Activated CD4-positive, alpha-beta memory T cell treated with anti-CD3 and anti-CD28 coated beads for 36 hours (primary cell): ENCODE measurements at regions of chr15 and their contacts with region 1.

Region 1: DNA sequence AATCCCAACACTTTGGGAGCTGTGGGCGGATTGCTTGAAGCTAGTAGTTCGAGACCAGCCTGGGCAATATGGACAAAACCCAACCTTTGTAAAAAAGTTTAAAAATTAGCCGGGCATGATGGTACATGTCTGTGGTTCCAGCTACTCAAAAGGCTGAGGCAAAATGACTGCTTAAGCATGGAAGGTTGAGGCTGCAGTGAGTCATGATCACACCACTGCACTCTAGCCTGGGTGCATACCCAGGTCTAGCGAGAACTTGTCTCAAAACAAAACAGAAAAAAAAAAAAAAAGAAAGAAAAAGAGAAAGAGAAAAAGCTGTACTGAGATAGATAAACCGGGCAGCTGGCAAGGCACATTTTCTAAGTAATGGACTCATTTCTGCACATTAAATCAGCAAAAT is 10.6 kb downstream of the ARPP19 start:
- DNase-seq: peak; percentile 84
- H3K4me3 Mint-ChIP-seq: peak overlapping the region; percentile 37
- H3K27ac Mint-ChIP-seq: peak overlapping the region; percentile 97
- H3K4me1 Mint-ChIP-seq: peaks cover 72% of the 10 kb centered on the region
- H3K27me3 Mint-ChIP-seq: no peaks in the 10 kb centered on the region

Region 2: DNA sequence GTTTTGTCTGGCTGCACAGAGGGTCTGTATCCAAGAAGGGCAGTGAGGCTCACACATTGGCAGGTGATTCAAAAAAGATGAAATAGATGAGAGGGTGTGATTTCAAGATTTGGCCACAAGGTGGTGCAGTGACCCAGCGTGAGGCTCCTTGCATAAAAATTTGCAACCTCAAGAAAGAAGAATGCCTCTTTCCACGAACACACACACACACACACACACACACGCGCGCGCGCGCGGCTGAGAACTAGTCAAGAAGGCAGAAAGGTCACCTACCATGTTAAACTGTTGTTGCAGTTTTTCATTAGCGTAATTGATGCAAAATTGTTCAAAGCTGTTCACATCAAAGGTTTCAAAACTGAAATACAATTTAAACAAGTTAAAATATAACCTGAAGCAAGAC is 301.8 kb before region 1 on chr15:
- CTCF ChIA-PET with region 1: interaction called, 3 read pairs
- POLR2A ChIA-PET with region 1: interaction called, 10 read pairs
- intact Hi-C with region 1: loop called (anchors 2 kb)
- DNase-seq: peak; percentile 84
- H3K4me3 Mint-ChIP-seq: peak overlapping the region; percentile 37
- H3K27ac Mint-ChIP-seq: peak overlapping the region; percentile 56
- H3K4me1 Mint-ChIP-seq: peaks cover 23% of the 10 kb centered on the region
- H3K27me3 Mint-ChIP-seq: no peaks in the 10 kb centered on the region

Region 3: DNA sequence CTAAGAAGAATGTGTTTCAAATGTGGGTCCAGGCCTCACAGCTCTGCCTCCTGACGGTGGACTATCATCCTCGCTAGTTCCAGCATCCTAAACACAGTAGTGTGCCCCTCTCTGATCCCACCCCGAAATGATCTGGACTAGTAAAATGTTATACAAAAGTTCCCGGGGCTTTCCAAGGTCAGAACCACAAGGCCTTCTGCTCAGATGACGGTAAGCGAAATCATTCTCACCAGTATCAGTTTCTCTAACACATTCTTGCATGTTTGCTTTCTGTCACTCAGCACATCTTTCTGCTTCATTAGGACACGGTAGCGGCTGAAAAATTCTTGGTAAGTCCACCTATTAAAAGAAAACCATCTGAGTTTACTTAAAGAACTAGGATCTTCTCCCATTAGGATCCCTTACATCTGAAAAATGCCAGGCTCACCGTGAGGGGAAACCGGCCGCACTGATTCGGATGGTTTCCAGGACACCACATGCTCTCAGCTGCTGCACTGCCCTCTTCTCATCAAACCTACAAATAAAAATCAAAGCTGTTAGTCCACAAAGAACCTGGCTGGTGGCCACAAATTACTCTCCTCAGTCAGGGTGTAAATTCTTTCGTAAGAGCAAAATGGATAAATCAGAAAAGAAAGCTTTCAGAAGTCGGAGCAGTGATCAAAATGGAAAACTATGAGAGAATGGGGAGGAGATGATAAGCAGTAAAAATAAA is 178.6 kb before region 1 on chr15:
- CTCF ChIA-PET with region 1: interaction called, 7 read pairs
- POLR2A ChIA-PET with region 1: interaction called, 13 read pairs
- intact Hi-C with region 1: loop called (anchors 1 kb)
- DNase-seq: peak; percentile 51
- H3K4me3 Mint-ChIP-seq: peak overlapping the region; percentile 49
- H3K27ac Mint-ChIP-seq: peak overlapping the region; percentile 75
- H3K4me1 Mint-ChIP-seq: peaks cover 43% of the 10 kb centered on the region
- H3K27me3 Mint-ChIP-seq: no peaks in the 10 kb centered on the region

Region 4: DNA sequence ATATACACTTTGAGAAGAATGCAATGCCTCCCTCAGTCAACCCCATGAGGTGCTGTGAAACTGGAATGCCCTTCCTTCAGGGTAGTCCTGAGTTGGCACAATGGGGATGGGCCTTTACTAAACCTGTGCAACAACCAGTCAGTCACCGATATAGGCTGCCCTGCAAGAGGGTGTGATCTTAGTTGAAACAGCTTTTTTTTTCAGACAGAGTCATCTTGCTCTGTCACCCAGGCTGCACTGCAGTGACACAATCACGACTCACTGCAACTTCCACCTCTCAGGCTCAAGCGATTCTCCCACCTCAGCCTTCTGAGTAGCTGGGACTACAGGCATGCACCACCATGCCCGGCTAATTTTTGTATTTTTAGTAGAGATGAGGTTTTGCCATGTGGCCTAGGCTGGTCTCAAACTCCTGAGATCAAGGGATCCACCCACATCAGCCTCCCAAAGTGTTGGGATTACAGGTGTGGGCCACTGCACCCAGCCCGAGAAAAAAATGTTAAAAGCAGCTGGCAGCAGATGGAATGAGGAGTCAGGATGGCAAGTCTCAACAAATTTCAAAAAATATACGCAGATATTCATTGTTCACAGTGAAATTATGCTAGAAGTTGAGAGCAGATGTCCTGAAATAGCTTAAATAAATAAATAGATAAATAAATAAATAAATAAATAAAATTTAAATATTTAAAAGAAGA is 61.3 kb before region 1 on chr15:
- CTCF ChIA-PET with region 1: no interaction called
- POLR2A ChIA-PET with region 1: interaction called, 3 read pairs
- intact Hi-C with region 1: loop called (anchors 1 kb)
- DNase-seq: peak; percentile 78
- H3K4me3 Mint-ChIP-seq: no peak overlapping the region
- H3K27ac Mint-ChIP-seq: no peak overlapping the region
- H3K4me1 Mint-ChIP-seq: peaks cover 18% of the 10 kb centered on the region
- H3K27me3 Mint-ChIP-seq: no peaks in the 10 kb centered on the region

Region 5: DNA sequence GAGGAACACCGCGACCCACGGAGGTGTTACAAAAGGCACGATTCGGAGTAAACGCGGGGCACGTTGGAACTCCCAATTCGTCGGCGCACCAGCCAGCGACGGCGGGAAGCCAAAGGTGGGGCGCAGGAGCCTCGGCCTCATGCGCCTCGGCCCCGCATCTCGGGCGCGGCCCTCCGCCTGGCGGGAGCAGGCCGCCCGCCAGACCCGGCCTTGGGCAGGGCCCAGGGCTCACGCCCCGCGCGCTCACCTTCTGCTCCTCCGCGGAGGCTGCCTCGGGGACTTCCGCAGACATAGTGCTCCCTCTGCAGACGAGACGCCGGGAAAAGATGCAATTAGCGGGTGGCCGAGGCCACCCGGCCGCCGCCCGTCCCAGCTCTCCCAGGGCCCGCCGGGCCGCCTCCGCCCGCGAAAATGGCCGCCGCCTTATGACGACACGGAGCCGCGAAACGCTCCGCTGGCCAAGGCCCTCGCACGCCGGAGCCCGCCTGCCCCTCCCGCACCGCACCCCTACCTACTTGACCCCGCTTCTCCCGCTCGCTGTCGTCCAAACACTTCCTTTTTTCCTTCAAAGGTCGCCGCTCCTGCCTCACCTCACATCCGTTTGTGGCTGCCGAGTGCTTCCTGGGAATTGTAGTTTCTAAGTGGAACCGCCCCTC is 10.5 kb after region 1 on chr15 and contains the start of gene ARPP19:
- CTCF ChIA-PET with region 1: interaction called, 5 read pairs
- POLR2A ChIA-PET with region 1: interaction called, 12 read pairs
- intact Hi-C with region 1: loop called (anchors 1 kb)
- DNase-seq: peak; percentile 91
- H3K4me3 Mint-ChIP-seq: peak within 1 kb of the TSS; percentile 98
- H3K27ac Mint-ChIP-seq: peak within 1 kb of the TSS; percentile 96
- H3K4me1 Mint-ChIP-seq: peaks cover 30% of the 10 kb centered on the region
- H3K27me3 Mint-ChIP-seq: no peaks in the 10 kb centered on the region
- total RNA-seq, gene ARPP19: 172 to 183 TPM

Region 6: DNA sequence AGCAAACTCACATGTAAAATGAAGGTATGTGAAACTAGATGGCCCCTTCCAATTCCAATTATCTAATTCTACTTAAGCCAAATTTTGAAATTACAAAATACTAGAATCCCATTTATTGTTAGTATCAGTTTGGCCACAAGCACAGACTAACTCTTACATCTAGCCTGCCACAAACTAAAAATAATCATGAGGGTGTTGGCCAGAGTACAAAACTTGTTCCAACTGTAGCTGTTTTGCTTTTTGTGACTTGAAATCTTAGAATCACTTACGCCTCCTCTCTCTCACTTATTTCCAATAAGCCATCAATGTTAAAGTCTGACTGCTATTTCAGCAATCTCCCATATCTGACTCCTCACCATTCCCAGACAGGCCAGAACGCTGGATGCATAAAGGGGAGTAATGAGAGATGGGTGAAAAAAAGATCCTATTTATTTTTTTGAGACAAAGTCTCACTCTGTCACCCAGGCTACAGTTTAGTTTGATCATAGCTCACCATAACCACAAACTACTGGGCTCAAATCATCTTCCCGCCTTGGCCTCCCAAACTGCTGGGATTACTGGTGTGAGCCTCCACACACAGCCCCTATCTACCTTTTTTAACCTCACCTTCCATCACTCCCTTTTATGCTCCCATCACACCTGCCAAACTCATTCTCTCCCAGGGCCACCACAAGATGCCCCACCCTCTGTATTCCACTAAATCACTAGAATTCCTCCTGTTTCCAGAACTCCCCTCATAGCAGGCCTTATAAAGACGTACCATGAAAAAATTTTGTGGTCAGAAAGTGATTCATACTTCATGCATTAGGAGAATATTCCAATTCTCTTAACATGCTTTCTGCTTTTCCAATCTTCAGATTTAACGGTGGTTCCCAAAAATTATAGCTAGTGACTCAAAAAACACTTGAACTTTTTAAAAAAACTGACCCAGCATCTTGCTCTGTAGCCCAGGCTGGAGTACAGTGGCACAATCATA is 84.5 kb after region 1 on chr15:
- CTCF ChIA-PET with region 1: no interaction called
- POLR2A ChIA-PET with region 1: no interaction called
- intact Hi-C with region 1: no loop called
- DNase-seq: no peak
- H3K4me3 Mint-ChIP-seq: no peak overlapping the region
- H3K27ac Mint-ChIP-seq: no peak overlapping the region
- H3K4me1 Mint-ChIP-seq: peaks cover 8% of the 10 kb centered on the region
- H3K27me3 Mint-ChIP-seq: no peaks in the 10 kb centered on the region

Region 7: DNA sequence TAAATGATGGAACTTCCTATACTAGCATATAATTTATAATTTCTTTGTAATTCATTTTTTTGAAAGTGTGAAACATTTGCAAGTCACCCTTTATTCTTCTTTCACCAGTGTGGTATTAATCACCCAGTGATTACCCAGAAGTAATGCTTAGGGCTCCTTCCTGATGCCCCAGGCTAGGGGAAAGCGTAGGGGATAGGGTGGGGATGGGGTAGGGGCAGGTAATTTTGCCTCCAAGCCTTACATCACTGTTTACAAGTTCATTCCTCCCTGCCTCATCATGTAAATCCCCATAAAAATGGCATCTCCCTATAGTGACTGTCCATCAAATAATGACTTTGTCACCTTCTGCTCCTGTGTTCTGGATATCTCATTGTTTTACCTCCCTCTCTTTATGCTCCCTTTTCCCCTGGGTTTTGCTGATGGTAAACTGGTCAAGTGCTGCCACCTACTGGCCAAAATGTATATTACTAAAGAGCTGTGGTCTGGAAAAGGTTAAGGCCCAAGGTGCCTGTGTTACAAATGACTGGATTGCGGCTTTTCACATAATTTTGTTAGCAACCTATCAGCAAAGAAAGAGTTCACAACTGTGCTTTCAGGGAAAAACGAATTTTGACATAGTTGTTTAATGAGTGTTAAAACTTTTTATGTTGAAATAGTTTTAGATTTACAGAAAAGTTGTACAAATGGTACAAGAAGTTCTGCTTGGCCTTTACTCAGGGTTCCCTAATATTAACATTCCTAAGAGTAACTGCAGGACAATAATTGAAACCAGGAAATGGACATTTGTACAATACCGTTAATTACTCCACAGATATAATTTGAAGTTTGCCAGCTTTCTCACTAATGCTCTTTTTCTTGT is 177.3 kb after region 1 on chr15:
- CTCF ChIA-PET with region 1: interaction called, 7 read pairs
- POLR2A ChIA-PET with region 1: no interaction called
- intact Hi-C with region 1: loop called (anchors 2 kb)
- DNase-seq: peak; percentile 75
- H3K4me3 Mint-ChIP-seq: no peak overlapping the region
- H3K27ac Mint-ChIP-seq: no peak overlapping the region
- H3K4me1 Mint-ChIP-seq: peaks cover 10% of the 10 kb centered on the region
- H3K27me3 Mint-ChIP-seq: peaks cover 1% of the 10 kb centered on the region